ENCODE measurements at regions of chr1 and their contacts with region 1.

Region 1: GRCh38 chr1:214386747-214387146 is 105.8 kb downstream of the SMYD2 start:
- DNase-seq: peak; percentile 17
- ATAC-seq: peak; percentile 83
- H3K4me3 ChIP-seq: no peak overlapping the region
- H3K27ac ChIP-seq: no peak overlapping the region
- H3K4me1 ChIP-seq: no peaks in the 10 kb centered on the region; the same call in 1 of the 2 replicates
- H3K27me3 ChIP-seq: no peaks in the 10 kb centered on the region
- CTCF ChIP-seq: no peak

Region 2: GRCh38 chr1:214466403-214467077 is 79.8 kb after region 1 on chr1:
- CTCF ChIA-PET with region 1: interaction called, 3 read pairs
- POLR2A ChIA-PET with region 1: no interaction called
- intact Hi-C with region 1: loop called (anchors 5 kb)
- DNase-seq: peak; percentile 81
- ATAC-seq: peak; percentile 58
- H3K4me3 ChIP-seq: peak overlapping the region; percentile 0; the same call in 1 of the 2 replicates
- H3K27ac ChIP-seq: peak overlapping the region; percentile 30
- H3K4me1 ChIP-seq: peaks cover 29% of the 10 kb centered on the region
- H3K27me3 ChIP-seq: no peaks in the 10 kb centered on the region
- CTCF ChIP-seq: no peak

Region 3: DNA sequence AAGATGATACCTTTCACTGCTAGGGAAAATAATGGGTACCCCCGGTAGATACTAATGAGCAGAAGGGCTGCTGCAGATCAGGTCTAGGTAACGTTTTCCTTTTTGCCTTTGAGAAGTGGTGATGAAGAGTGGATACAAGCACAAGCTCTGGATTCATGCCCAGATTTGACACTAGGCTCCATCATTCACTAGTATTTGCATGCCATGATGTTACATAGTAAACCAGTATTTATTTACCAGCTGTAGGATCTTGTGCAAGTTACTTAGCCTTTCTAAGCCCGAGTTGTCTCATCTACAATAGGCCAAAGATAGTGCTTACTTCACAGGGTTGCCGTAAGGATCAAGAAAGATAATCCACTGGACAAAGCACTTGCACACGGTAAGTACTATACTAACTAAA is 150.5 kb after region 1 on chr1:
- CTCF ChIA-PET with region 1: no interaction called
- POLR2A ChIA-PET with region 1: no interaction called
- intact Hi-C with region 1: no loop called
- DNase-seq: peak; percentile 46
- ATAC-seq: peak; percentile 72
- H3K4me3 ChIP-seq: no peak overlapping the region
- H3K27ac ChIP-seq: no peak overlapping the region
- H3K4me1 ChIP-seq: no peaks in the 10 kb centered on the region
- H3K27me3 ChIP-seq: no peaks in the 10 kb centered on the region
- CTCF ChIP-seq: no peak

Region 4: GRCh38 chr1:214590696-214591095 is 203.9 kb after region 1 on chr1:
- CTCF ChIA-PET with region 1: interaction called, 4 read pairs
- POLR2A ChIA-PET with region 1: interaction called, 3 read pairs
- intact Hi-C with region 1: loop called (anchors 1 kb)
- DNase-seq: peak; percentile 46
- ATAC-seq: peak; percentile 68
- H3K4me3 ChIP-seq: no peak overlapping the region
- H3K27ac ChIP-seq: no peak overlapping the region
- H3K4me1 ChIP-seq: no peaks in the 10 kb centered on the region
- H3K27me3 ChIP-seq: no peaks in the 10 kb centered on the region
- CTCF ChIP-seq: peak; percentile 61

Region 5: GRCh38 chr1:214637722-214638458 is 251.1 kb after region 1 on chr1:
- CTCF ChIA-PET with region 1: no interaction called
- POLR2A ChIA-PET with region 1: no interaction called
- intact Hi-C with region 1: loop called (anchors 2 kb)
- DNase-seq: peak; percentile 68
- ATAC-seq: peak; percentile 83
- H3K4me3 ChIP-seq: no peak overlapping the region
- H3K27ac ChIP-seq: no peak overlapping the region
- H3K4me1 ChIP-seq: peaks cover 18% of the 10 kb centered on the region
- H3K27me3 ChIP-seq: no peaks in the 10 kb centered on the region
- CTCF ChIP-seq: peak; percentile 97